Heart left ventricle (tissue), 16 donors: ENCODE measurements at regions of chr11 and their contacts with region 1.

Region 1: DNA sequence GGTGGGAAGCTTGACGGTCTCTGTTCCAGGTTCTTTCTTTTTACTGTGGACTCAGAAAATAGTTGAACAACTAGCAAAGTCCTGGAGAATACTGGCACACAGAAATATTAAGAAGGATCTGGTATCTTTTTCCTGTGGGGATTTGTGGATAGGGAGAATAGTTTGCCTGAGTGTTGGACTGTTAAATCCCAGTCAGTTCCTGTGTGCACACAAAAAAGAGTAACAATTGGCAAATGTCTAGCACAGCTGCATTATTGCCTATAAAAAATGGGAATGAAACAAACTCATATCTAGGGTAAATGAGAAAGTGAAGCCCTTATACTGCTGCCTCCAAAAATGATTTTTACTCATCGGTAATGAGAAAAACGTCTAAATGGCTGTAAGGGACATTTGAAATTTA is 828.2 kb downstream of the JRKL start:
- DNase-seq: no peak
- ATAC-seq: no peak
- H3K4me3 ChIP-seq: no peak overlapping the region
- H3K27ac ChIP-seq: no peak overlapping the region
- H3K4me1 ChIP-seq: no peaks in the 10 kb centered on the region
- H3K27me3 ChIP-seq: no peaks in the 10 kb centered on the region
- CTCF ChIP-seq: no peak
- POLR2A ChIP-seq: no peak

Region 2: GRCh38 chr11:97163631-97164191 is 54.3 kb before region 1 on chr11:
- intact Hi-C with region 1: loop called in 1 of 10 experiments (anchors 5 kb)
- DNase-seq: no peak
- ATAC-seq: no peak
- H3K4me3 ChIP-seq: no peak overlapping the region
- H3K27ac ChIP-seq: no peak overlapping the region
- H3K4me1 ChIP-seq: no peaks in the 10 kb centered on the region
- H3K27me3 ChIP-seq: no peaks in the 10 kb centered on the region
- CTCF ChIP-seq: no peak
- POLR2A ChIP-seq: no peak